Right ventricle myocardium inferior (tissue), 1 donor: ENCODE measurements at regions of chr2 and their contacts with region 1.

Region 1: GRCh38 chr2:11863513-11864328 is 117.3 kb downstream of the LPIN1 start:
- DNase-seq: peak; percentile 91
- ATAC-seq: peak; percentile 95

Region 2: GRCh38 chr2:12176623-12177454 is 313.1 kb after region 1 on chr2:
- intact Hi-C with region 1: loop called (anchors 10 kb)
- DNase-seq: no peak
- ATAC-seq: peak; percentile 73

Region 3: GRCh38 chr2:12326449-12327190 is 462.9 kb after region 1 on chr2:
- intact Hi-C with region 1: loop called (anchors 5 kb)
- DNase-seq: no peak
- ATAC-seq: peak; percentile 24

Region 4: DNA sequence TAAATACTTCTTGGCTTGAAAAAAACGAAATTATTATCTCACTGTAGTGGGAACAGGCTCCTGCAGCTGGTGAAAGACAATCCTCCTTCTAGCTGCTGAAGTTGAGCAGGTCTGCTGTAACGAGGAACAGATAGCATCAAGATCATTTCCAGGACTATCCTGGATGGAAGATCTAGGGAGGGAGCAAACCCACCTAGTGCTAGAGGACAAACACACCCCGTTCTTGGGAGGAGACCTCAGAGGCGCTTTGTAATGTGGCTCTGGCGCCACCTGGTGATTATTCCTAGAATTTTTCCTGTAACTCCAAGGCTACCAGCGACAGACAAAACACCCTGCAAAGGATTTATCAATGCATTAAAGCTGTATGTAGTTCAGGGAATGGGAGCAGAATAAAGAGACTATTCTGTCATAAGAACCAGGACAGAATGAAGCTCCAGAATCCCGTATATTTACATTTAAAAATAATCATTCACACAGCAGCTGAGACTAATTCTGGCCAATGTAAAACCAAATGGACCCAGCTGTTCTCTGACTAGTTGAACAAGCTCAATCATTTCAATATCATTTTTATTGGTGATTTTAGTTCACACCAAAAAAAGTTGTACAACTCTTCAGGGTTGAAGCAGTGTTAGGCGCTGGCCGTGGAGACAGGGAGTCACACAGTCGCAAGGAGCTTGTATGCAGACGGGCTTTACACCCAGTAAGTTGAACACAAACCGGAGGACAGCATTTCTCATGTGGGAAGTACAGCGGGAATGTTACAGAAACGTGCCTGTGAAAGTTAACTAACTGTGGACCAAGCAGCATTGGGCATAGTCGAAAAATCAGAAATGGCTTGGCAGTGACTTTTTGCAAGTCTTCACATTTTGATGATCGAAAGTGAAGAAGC is 1143.4 kb after region 1 on chr2:
- intact Hi-C with region 1: loop called (anchors 2 kb)
- DNase-seq: no peak
- ATAC-seq: peak; percentile 90